GM12878 (cell line): ENCODE measurements at regions of chr22 and their contacts with region 1.

Region 1: DNA sequence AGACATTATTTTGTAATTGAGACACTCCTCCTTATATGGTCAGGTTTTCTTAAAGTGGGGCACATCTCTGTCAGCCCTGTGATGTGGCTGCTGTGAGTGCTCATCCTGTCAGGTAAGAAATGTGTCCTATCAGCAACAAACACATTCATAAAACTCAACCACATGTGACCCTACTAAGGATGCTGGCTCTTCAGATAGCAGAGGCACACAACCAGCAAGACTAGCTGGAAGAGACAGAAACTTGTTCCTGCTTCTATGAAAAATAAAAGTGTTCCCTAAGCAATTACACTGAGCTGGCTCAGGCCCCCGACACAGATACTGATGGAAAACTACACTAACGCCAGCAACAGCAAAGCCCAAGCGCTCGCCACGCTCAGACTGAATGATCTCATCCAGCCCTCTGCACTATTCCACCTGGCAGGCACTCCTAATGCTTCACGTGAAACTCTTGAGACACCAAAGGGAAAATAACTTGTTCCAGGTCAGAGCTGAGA is 49.8 kb upstream of the CYP2D6 start:
- DNase-seq: no peak
- ATAC-seq: peak; percentile 27
- H3K4me3 ChIP-seq: no peak overlapping the region
- H3K27ac ChIP-seq: peak overlapping the region; percentile 66
- H3K4me1 ChIP-seq: peaks cover 23% of the 10 kb centered on the region
- H3K27me3 ChIP-seq: no peaks in the 10 kb centered on the region
- CTCF ChIP-seq: no peak
- EP300 ChIP-seq: no peak
- POLR2A ChIP-seq: no peak
- RAD21 ChIP-seq: no peak

Region 2: GRCh38 chr22:42194962-42195361 is 14.6 kb after region 1 on chr22:
- CTCF ChIA-PET with region 1: interaction called, 3 read pairs
- POLR2A ChIA-PET with region 1: interaction called, 11 read pairs
- RAD21 ChIA-PET with region 1: interaction called, 3 read pairs
- SMC1A ChIA-PET with region 1: interaction called, 153 read pairs
- in situ Hi-C with region 1: no loop called
- intact Hi-C with region 1: no loop called
- DNase-seq: no peak
- ATAC-seq: peak; percentile 34; the same call in 2 of the 3 replicates
- H3K4me3 ChIP-seq: no peak overlapping the region
- H3K27ac ChIP-seq: no peak overlapping the region
- H3K4me1 ChIP-seq: peaks cover 3% of the 10 kb centered on the region; the same call in 1 of the 2 replicates
- H3K27me3 ChIP-seq: no peaks in the 10 kb centered on the region
- CTCF ChIP-seq: no peak
- EP300 ChIP-seq: no peak
- POLR2A ChIP-seq: no peak
- RAD21 ChIP-seq: no peak

Region 3: GRCh38 chr22:42269407-42270177 is 89.2 kb after region 1 on chr22:
- CTCF ChIA-PET with region 1: no interaction called
- POLR2A ChIA-PET with region 1: interaction called, 3 read pairs
- RAD21 ChIA-PET with region 1: interaction called, 3 read pairs
- SMC1A ChIA-PET with region 1: interaction called, 8 read pairs
- in situ Hi-C with region 1: no loop called
- intact Hi-C with region 1: loop called (anchors 5 kb)
- DNase-seq: no peak
- ATAC-seq: peak; percentile 88
- H3K4me3 ChIP-seq: peak overlapping the region; percentile 97
- H3K27ac ChIP-seq: peak overlapping the region; percentile 81
- H3K4me1 ChIP-seq: peaks cover 8% of the 10 kb centered on the region; the same call in 1 of the 2 replicates
- H3K27me3 ChIP-seq: no peaks in the 10 kb centered on the region
- CTCF ChIP-seq: peak in 2 of 3 experiments; percentile 24 to 36; a peak in 2 of 6 replicates
- EP300 ChIP-seq: no peak
- POLR2A ChIP-seq: peak; percentile 83
- RAD21 ChIP-seq: 0 out of 2 replicates have a peak, but pooled peaks have one; percentile 10